Naive thymus-derived CD4-positive, alpha-beta T cell (primary cell): ENCODE measurements at regions of chr4 and their contacts with region 1.

Region 1: DNA sequence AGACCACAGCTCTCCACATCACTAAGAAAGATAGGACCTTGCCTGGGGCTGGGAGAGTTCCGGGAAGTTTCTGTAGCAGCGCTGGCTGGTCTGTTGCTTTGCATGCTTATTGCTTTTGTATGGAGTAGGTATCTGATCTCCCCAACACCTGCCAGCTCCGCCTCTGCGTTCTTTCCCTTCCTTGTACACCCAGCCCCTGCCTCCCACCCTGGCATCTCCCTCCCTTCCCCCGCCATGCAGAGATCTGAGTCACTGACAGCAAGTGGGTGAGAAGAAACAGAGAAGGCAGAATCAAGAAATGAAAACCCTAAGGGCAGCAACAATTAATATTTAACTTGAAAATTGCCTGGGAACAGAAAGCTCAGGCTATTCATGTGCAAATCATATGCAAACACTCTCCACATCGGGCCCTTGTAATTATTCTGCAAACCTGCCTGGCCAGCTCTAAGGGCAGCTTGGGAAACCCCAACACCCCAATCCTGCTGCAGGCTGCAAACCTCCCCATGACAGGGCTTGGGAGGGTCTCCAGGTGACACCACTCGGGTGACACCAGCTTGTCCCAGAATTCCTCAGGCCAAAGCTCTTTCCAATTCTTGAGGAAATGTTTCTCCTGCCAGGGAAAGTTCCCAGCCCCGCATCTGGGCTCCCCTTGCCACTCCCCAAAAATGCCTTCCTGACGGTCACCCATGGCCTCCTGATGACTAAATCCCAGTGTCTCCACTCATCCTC is 257.2 kb downstream of the FBXW7 start:
- DNase-seq: no peak
- ATAC-seq: no peak
- H3K4me3 ChIP-seq: no peak overlapping the region
- H3K4me3 Mint-ChIP-seq: no peak overlapping the region
- H3K27ac ChIP-seq: no peak overlapping the region
- H3K27ac Mint-ChIP-seq: peak overlapping the region in 3 of 9 donors; percentile 31 to 33 (median 31)
- H3K4me1 ChIP-seq: peaks cover 0 to 21% of the 10 kb centered on the region in 2 donors
- H3K4me1 Mint-ChIP-seq: peaks cover 9 to 42% (median 29%) of the 10 kb centered on the region in 7 donors
- H3K27me3 ChIP-seq: no peaks in the 10 kb centered on the region
- H3K27me3 Mint-ChIP-seq: no peaks in the 10 kb centered on the region

Region 2: GRCh38 chr4:152289541-152289940 is 10.9 kb after region 1 on chr4:
- CTCF ChIA-PET with region 1: no interaction called
- POLR2A ChIA-PET with region 1: interaction called, 10 read pairs
- intact Hi-C with region 1: no loop called
- DNase-seq: no peak
- ATAC-seq: no peak
- H3K4me3 ChIP-seq: no peak overlapping the region
- H3K4me3 Mint-ChIP-seq: no peak overlapping the region
- H3K27ac ChIP-seq: no peak overlapping the region
- H3K27ac Mint-ChIP-seq: no peak overlapping the region
- H3K4me1 ChIP-seq: no peaks in the 10 kb centered on the region
- H3K4me1 Mint-ChIP-seq: peaks cover 0 to 6% (median 0%) of the 10 kb centered on the region in 7 donors
- H3K27me3 ChIP-seq: no peaks in the 10 kb centered on the region
- H3K27me3 Mint-ChIP-seq: peaks cover 0 to 2% (median 0%) of the 10 kb centered on the region in 5 donors

Region 3: GRCh38 chr4:152328596-152328995 is 49.9 kb after region 1 on chr4:
- CTCF ChIA-PET with region 1: no interaction called
- POLR2A ChIA-PET with region 1: no interaction called
- intact Hi-C with region 1: no loop called
- DNase-seq: no peak
- ATAC-seq: no peak
- H3K4me3 ChIP-seq: no peak overlapping the region
- H3K4me3 Mint-ChIP-seq: no peak overlapping the region
- H3K27ac ChIP-seq: no peak overlapping the region
- H3K27ac Mint-ChIP-seq: peak overlapping the region in 2 of 9 donors; percentile 75 to 76
- H3K4me1 ChIP-seq: peaks cover 0 to 13% of the 10 kb centered on the region in 2 donors
- H3K4me1 Mint-ChIP-seq: peaks cover 6 to 24% (median 21%) of the 10 kb centered on the region in 7 donors
- H3K27me3 ChIP-seq: no peaks in the 10 kb centered on the region
- H3K27me3 Mint-ChIP-seq: no peaks in the 10 kb centered on the region

Region 4: DNA sequence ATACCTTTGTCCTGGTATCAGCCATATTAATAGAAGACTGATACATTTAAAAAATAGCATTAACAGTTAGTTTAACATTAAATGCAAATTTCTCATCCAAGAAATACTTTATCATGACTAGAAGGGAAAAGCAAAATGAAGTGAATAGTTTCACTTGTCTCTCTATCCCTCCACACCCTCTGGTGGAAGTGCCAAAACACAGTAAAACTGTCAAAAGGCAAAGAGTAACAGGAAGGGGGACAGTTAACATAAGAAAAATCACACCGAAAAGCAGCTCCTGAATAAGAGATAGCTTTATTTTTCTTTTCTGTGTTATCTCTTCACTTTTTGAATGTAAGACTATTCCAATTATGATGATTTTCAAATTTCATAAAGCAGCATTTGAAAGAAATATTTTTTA is 70.0 kb after region 1 on chr4:
- CTCF ChIA-PET with region 1: no interaction called
- POLR2A ChIA-PET with region 1: no interaction called
- intact Hi-C with region 1: no loop called
- DNase-seq: peak in 6 of 9 donors; percentile 4 to 48 (median 36)
- ATAC-seq: no peak
- H3K4me3 ChIP-seq: no peak overlapping the region
- H3K4me3 Mint-ChIP-seq: no peak overlapping the region
- H3K27ac ChIP-seq: no peak overlapping the region
- H3K27ac Mint-ChIP-seq: peak overlapping the region in 1 of 9 donors; percentile 10
- H3K4me1 ChIP-seq: peaks cover 0 to 8% of the 10 kb centered on the region in 2 donors
- H3K4me1 Mint-ChIP-seq: peaks cover 8 to 30% (median 18%) of the 10 kb centered on the region in 7 donors
- H3K27me3 ChIP-seq: no peaks in the 10 kb centered on the region
- H3K27me3 Mint-ChIP-seq: no peaks in the 10 kb centered on the region

Region 5: GRCh38 chr4:152719801-152720556 is 441.3 kb after region 1 on chr4:
- CTCF ChIA-PET with region 1: no interaction called
- POLR2A ChIA-PET with region 1: no interaction called
- intact Hi-C with region 1: no loop called
- DNase-seq: no peak
- ATAC-seq: no peak
- H3K4me3 ChIP-seq: no peak overlapping the region
- H3K4me3 Mint-ChIP-seq: no peak overlapping the region
- H3K27ac ChIP-seq: no peak overlapping the region
- H3K27ac Mint-ChIP-seq: no peak overlapping the region
- H3K4me1 ChIP-seq: no peaks in the 10 kb centered on the region
- H3K4me1 Mint-ChIP-seq: no peaks in the 10 kb centered on the region
- H3K27me3 ChIP-seq: no peaks in the 10 kb centered on the region
- H3K27me3 Mint-ChIP-seq: peaks cover 0 to 10% (median 5%) of the 10 kb centered on the region in 5 donors

Region 6: GRCh38 chr4:152831416-152831815 is 552.7 kb after region 1 on chr4:
- CTCF ChIA-PET with region 1: no interaction called
- POLR2A ChIA-PET with region 1: no interaction called
- intact Hi-C with region 1: no loop called
- DNase-seq: no peak
- ATAC-seq: no peak
- H3K4me3 ChIP-seq: no peak overlapping the region
- H3K4me3 Mint-ChIP-seq: no peak overlapping the region
- H3K27ac ChIP-seq: no peak overlapping the region
- H3K27ac Mint-ChIP-seq: no peak overlapping the region
- H3K4me1 ChIP-seq: no peaks in the 10 kb centered on the region
- H3K4me1 Mint-ChIP-seq: peaks cover 0 to 6% (median 0%) of the 10 kb centered on the region in 7 donors
- H3K27me3 ChIP-seq: no peaks in the 10 kb centered on the region
- H3K27me3 Mint-ChIP-seq: no peaks in the 10 kb centered on the region